Prostate gland (tissue), 2 donors: ENCODE measurements at regions of chr17 and their contacts with region 1.

Region 1: DNA sequence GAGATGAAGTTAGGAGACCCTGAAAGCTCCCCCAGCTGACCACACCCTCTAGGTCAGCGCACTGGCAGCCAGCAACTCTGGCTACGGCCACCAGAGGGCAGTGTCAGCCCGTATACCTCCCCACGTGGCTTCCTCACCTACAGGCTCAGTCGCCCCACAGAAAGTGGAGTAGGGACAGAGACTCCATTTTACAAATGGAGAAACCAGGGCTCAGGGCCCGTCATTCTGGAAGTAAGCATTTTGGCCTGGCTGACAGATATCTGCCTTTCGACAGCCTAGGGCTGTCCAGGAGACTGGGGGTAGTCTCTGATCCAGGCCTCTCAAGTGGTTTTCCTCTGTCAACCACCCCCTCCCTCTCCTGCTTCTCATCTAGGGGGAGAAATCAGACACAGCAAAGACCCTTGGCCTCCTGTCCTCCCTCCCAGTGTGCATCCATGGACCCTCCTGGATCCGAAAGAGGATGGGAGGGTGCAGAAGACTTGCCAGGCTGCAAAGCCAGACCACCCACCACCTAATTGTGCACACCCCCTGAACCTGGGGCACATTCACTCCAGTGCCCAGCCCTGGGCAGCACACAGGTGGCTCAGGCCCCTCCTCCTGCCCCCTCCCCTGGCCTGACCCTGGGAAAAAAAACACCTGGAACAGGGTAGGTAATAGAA is 3.8 kb upstream of the HAP1 start:
- DNase-seq: peak; percentile 63
- H3K4me3 ChIP-seq: no peak overlapping the region
- H3K27ac ChIP-seq: no peak overlapping the region
- H3K4me1 ChIP-seq: no peaks in the 10 kb centered on the region
- H3K27me3 ChIP-seq: peaks cover 6% of the 10 kb centered on the region
- CTCF ChIP-seq: peak; percentile 89 to 99 (median 98)
- POLR2A ChIP-seq: no peak

Region 2: GRCh38 chr17:41801374-41802271 is 63.4 kb after region 1 on chr17:
- intact Hi-C with region 1: loop called (anchors 1 kb)
- DNase-seq: peak; percentile 83
- H3K4me3 ChIP-seq: no peak overlapping the region
- H3K27ac ChIP-seq: peak overlapping the region; percentile 55 to 60
- H3K4me1 ChIP-seq: peaks cover 4% of the 10 kb centered on the region
- H3K27me3 ChIP-seq: no peaks in the 10 kb centered on the region
- CTCF ChIP-seq: peak; percentile 97 to 100 (median 99)
- POLR2A ChIP-seq: no peak

Region 3: DNA sequence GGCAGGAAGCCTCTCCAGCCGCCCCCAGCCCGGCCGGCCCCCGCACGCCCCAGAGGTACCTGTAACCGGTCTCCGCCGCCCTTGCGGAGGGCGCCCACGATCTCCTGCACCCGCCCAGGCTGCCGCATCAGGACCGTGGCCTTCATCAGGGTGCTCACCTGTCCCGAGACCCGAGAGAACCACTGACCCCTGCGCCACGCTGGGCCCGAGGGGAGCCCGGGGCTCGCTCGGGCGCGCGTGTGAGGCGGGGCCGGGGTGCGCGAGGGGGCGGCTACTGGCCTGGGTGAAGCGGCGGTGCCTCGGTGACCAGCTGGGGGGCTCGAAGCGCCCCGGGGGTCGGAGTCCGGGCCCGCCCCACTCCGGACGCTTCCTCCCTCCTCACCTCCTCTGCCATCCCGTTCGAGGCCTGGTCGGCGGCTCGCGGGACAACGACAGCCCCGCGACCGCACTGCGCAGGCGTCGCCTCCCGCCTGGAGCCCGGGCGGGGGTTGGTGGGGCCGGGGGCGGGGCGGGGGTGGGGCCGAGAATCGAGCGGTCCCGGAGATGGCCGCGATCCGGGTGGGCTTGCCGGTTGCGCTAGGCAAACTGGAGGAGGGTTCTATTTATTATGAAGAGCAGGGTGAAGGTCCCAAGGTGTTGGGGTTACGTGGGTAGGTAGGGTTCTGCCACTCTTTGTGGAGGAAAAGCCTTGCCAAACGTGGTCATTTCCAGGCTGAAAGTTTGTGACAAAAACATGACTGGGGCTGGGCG is 97.8 kb after region 1 on chr17 and contains the start of gene NT5C3B:
- intact Hi-C with region 1: no loop called
- DNase-seq: peak; percentile 39
- H3K4me3 ChIP-seq: peak within 1 kb of the TSS; percentile 79 to 88
- H3K27ac ChIP-seq: peak within 1 kb of the TSS; percentile 79 to 80
- H3K4me1 ChIP-seq: no peaks in the 10 kb centered on the region
- H3K27me3 ChIP-seq: no peaks in the 10 kb centered on the region
- CTCF ChIP-seq: no peak
- POLR2A ChIP-seq: peak; percentile 18
- total RNA-seq, gene NT5C3B: 53.9 to 67.2 TPM

Region 4: DNA sequence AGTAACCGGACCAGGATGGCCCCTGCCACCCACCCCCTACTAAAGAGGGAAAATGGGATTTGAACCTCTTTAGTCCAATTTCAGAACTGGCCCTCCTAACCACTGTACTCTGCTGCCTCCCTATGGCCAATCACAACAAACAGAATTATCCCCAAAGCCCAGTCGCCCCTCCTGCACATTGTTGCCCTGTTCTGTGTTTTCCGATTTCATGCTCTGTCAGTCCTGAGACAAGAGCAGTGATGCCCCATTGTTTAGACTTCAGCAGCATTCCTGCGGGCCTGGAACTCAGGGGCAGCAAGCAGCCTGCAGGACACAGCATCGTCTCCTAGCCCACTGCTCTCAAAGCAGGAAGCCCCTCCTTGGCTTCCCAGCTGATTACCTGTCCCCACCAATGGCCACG is 147.5 kb after region 1 on chr17:
- intact Hi-C with region 1: loop called (anchors 10 kb)
- DNase-seq: no peak
- H3K4me3 ChIP-seq: no peak overlapping the region
- H3K27ac ChIP-seq: no peak overlapping the region
- H3K4me1 ChIP-seq: no peaks in the 10 kb centered on the region
- H3K27me3 ChIP-seq: no peaks in the 10 kb centered on the region
- CTCF ChIP-seq: peak in 1 of 4 experiments; percentile 19
- POLR2A ChIP-seq: no peak